Colonic mucosa (tissue), 4 donors: ENCODE measurements at regions of chr3 and their contacts with region 1.

Region 1: GRCh38 chr3:50572158-50572557 is 2.8 kb downstream of the HEMK1 start:
- DNase-seq: peak; percentile 83
- H3K4me3 ChIP-seq: no peak overlapping the region
- H3K27ac ChIP-seq: peak overlapping the region; percentile 37
- H3K4me1 ChIP-seq: no peaks in the 10 kb centered on the region
- H3K27me3 ChIP-seq: no peaks in the 10 kb centered on the region
- CTCF ChIP-seq: peak; percentile 87

Region 2: DNA sequence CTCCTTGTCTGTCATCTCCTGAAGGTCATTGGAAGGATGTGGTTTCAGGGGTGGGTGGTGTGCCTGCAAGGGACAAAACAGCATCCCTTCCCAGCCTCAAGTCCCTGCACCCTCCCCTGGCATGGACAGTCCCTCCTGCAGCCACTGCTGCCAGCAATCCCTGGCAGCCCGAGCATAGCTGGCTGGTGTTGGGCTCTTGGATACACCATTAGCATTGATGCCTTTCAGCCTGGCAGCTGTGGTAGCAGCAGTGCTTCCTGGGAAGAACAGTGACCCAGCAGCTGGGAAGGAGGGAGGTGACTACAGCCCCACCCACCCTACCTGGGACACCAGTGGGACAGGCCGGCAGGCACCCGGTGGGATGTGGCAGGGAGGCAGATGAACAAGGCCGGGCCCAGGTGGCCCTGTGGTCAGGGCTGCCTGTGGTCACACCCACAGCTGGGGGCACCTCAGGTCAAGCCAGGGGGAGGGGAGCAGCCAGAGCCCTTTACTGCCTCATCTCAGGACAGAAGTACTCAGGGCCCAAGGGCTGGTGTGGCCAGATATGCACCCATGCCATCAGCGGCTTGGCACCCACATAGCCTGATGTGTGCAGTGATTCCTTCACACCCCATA is 179.9 kb before region 1 on chr3:
- intact Hi-C with region 1: no loop called
- DNase-seq: no peak
- H3K4me3 ChIP-seq: no peak overlapping the region
- H3K27ac ChIP-seq: no peak overlapping the region
- H3K4me1 ChIP-seq: peaks cover 4% of the 10 kb centered on the region
- H3K27me3 ChIP-seq: no peaks in the 10 kb centered on the region
- CTCF ChIP-seq: no peak

Region 3: DNA sequence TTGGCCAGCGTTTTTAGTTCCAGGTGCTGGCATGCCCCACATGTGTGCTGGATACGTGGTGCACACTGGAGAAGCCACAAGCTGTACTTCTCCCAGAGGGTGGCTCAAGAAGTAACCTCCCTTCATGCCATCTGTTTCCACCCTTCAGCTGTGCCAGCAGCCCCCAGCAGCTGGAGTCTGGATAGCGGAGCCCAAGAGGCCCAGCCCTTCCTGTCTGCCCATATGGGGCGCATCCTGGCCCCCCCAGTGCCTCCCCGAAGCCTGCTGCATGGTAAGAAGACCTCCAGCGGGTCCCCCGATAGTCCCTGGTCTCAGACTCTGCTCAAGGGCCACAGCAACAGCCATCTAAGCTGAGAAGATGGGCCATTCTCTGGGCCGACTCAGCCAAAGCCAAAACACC is 807.1 kb after region 1 on chr3:
- intact Hi-C with region 1: loop called (anchors 5 kb)
- DNase-seq: no peak
- H3K4me3 ChIP-seq: no peak overlapping the region
- H3K27ac ChIP-seq: no peak overlapping the region
- H3K4me1 ChIP-seq: no peaks in the 10 kb centered on the region
- H3K27me3 ChIP-seq: no peaks in the 10 kb centered on the region
- CTCF ChIP-seq: no peak